Activated naive CD4-positive, alpha-beta T cell treated with anti-CD3 and anti-CD28 coated beads for 36 hours (primary cell): ENCODE measurements at regions of chr10 and their contacts with region 1.

Region 1: DNA sequence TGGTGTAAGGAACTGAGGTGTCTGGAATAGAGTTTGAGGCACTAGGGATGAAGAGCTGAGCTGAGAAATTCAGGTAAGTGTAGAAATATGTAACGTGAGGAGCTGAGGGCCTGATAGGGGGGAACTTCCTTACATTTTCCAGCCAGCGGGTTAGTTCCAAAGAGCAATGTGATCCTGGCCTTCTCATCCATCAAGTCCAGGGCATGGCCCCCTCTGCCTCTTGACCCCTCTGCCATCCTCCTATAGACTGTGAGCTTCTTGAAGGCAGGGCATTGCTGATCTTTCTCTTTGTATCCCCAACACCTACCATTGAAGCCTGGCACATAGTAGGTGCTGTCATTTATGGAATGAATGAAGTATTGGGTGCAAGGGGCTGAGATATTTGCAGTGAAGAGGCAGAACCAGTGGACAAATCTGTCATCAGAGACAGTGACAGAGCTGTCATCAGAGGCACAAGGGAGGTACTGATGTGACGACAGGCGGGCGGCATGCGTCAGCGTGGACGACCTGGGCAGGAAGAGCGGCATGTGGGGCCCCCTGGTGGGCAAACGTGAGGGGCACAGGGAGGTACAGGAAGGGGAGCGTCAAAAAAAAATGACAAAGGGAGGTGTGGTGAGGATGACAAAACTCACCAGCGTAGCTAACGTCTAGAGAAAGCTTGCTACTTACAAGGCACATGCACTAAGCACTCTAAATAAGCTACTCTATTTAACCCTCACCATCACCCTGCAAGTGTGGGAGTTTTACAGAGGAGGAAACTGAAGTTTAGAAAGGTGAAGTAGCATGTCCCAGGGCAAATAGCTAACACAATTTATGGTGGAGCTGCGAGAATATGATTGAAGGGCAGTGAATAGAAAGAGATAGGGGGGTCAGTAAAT is 5.2 kb upstream of the CAMK2G start:
- DNase-seq: peak; percentile 97
- H3K4me3 Mint-ChIP-seq: no peak overlapping the region
- H3K27ac Mint-ChIP-seq: peak overlapping the region; percentile 50
- H3K4me1 Mint-ChIP-seq: peaks cover 43% of the 10 kb centered on the region
- H3K27me3 Mint-ChIP-seq: no peaks in the 10 kb centered on the region

Region 2: DNA sequence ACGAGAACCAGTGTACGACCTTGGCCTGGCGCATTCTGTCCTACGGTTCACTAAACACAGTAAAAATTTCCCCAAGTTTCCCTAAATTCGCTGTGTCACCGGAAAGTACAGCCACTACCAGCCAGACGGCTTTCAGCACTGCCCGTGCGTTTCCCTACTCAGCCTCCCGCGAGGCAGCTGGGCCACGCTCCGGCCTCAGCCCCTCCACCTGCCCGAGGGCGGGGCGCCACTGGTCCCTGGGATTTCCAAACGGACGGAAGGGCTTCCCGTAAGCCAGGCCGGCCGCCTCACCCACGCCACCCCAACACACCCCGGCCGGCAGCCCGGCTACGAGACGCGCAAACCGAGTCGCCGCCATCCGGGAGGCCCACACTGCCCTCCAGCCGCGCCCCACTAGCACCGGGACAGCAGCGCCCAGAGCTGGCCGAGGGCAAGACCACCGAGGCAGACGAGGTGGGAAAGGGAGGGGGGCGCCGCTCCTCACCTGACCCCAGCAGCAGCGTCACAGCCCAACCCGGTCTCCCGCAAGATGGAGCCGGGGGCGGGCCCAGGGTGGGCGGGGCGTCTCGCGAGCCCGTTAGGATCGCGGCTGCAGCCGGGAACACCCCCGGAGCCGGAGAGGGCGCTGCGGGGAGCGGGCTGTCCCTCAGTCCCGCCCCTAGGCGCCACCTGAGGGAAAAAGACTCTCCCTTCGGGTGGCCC is 465.9 kb before region 1 on chr10 and contains the start of gene ANXA7:
- CTCF ChIA-PET with region 1: no interaction called
- intact Hi-C with region 1: loop called (anchors 5 kb)
- DNase-seq: peak; percentile 96
- H3K4me3 Mint-ChIP-seq: peak within 1 kb of the TSS; percentile 95
- H3K27ac Mint-ChIP-seq: peak within 1 kb of the TSS; percentile 93
- H3K4me1 Mint-ChIP-seq: peaks cover 56% of the 10 kb centered on the region
- H3K27me3 Mint-ChIP-seq: peaks cover 5% of the 10 kb centered on the region
- total RNA-seq, gene ANXA7: 130 to 134 TPM

Region 3: GRCh38 chr10:73772280-73773151 is 107.0 kb before region 1 on chr10:
- CTCF ChIA-PET with region 1: interaction called, 3 read pairs
- intact Hi-C with region 1: loop called (anchors 1 kb)
- DNase-seq: peak; percentile 81
- H3K4me3 Mint-ChIP-seq: peak overlapping the region; percentile 93
- H3K27ac Mint-ChIP-seq: peak overlapping the region; percentile 93
- H3K4me1 Mint-ChIP-seq: peaks cover 44% of the 10 kb centered on the region
- H3K27me3 Mint-ChIP-seq: no peaks in the 10 kb centered on the region

Region 4: GRCh38 chr10:73848821-73849489 is 30.6 kb before region 1 on chr10:
- CTCF ChIA-PET with region 1: interaction called, 443 read pairs
- intact Hi-C with region 1: loop called (anchors 1 kb)
- DNase-seq: peak; percentile 96
- H3K4me3 Mint-ChIP-seq: no peak overlapping the region
- H3K27ac Mint-ChIP-seq: peak overlapping the region; percentile 66
- H3K4me1 Mint-ChIP-seq: peaks cover 8% of the 10 kb centered on the region
- H3K27me3 Mint-ChIP-seq: no peaks in the 10 kb centered on the region

Region 5: GRCh38 chr10:73908853-73909538 is 29.5 kb after region 1 on chr10:
- CTCF ChIA-PET with region 1: interaction called, 13 read pairs
- intact Hi-C with region 1: no loop called
- DNase-seq: peak; percentile 86
- H3K4me3 Mint-ChIP-seq: peak overlapping the region; percentile 20
- H3K27ac Mint-ChIP-seq: peak overlapping the region; percentile 7
- H3K4me1 Mint-ChIP-seq: peaks cover 34% of the 10 kb centered on the region
- H3K27me3 Mint-ChIP-seq: peaks cover 38% of the 10 kb centered on the region

Region 6: GRCh38 chr10:73946253-73947155 is 67.0 kb after region 1 on chr10:
- CTCF ChIA-PET with region 1: interaction called, 396 read pairs
- intact Hi-C with region 1: no loop called
- DNase-seq: no peak
- H3K4me3 Mint-ChIP-seq: no peak overlapping the region
- H3K27ac Mint-ChIP-seq: no peak overlapping the region
- H3K4me1 Mint-ChIP-seq: no peaks in the 10 kb centered on the region
- H3K27me3 Mint-ChIP-seq: no peaks in the 10 kb centered on the region

Region 7: DNA sequence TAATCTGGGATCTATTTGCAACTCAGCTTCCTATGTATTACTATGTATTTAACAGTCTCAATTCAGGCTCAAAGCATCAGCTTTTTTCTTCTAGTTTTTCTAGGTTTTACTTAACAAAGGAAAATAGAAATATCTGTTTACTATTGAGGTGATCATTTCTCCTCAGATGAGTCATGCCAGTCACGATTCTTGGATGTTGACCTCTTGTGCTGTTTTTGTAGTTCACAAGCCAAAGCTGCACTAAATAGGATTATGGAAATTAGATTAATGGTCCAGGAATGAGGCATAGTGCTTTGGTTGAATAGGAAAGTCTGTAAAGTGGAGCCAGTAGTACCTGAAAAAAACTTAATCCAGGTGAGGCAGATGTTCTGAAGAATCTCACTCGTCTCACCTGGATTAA is 748.6 kb after region 1 on chr10:
- CTCF ChIA-PET with region 1: no interaction called
- intact Hi-C with region 1: no loop called
- DNase-seq: no peak
- H3K4me3 Mint-ChIP-seq: no peak overlapping the region
- H3K27ac Mint-ChIP-seq: no peak overlapping the region
- H3K4me1 Mint-ChIP-seq: no peaks in the 10 kb centered on the region
- H3K27me3 Mint-ChIP-seq: no peaks in the 10 kb centered on the region